Activated CD4-positive, alpha-beta memory T cell treated with anti-CD3 and anti-CD28 coated beads, Interleukin-2, amount 10 ng/mL, durations not matched to agents 7 days and 5 days (primary cell): ENCODE measurements at regions of chr2 and their contacts with region 1.

Region 1: GRCh38 chr2:24084386-24085361 is at the start of gene TP53I3:
- DNase-seq: peak; percentile 84
- H3K4me3 Mint-ChIP-seq: peak within 1 kb of the TSS; percentile 85
- H3K27ac Mint-ChIP-seq: peak within 1 kb of the TSS; percentile 85
- H3K4me1 Mint-ChIP-seq: peaks cover 21% of the 10 kb centered on the region
- H3K27me3 Mint-ChIP-seq: no peaks in the 10 kb centered on the region
- total RNA-seq, gene TP53I3: 2.7 to 2.9 TPM

Region 2: GRCh38 chr2:23824777-23825212 is 259.9 kb before region 1 on chr2:
- CTCF ChIA-PET with region 1: interaction called, 80 read pairs
- POLR2A ChIA-PET with region 1: interaction called, 4 read pairs
- DNase-seq: no peak
- H3K4me3 Mint-ChIP-seq: no peak overlapping the region
- H3K27ac Mint-ChIP-seq: no peak overlapping the region
- H3K4me1 Mint-ChIP-seq: no peaks in the 10 kb centered on the region
- H3K27me3 Mint-ChIP-seq: no peaks in the 10 kb centered on the region

Region 3: DNA sequence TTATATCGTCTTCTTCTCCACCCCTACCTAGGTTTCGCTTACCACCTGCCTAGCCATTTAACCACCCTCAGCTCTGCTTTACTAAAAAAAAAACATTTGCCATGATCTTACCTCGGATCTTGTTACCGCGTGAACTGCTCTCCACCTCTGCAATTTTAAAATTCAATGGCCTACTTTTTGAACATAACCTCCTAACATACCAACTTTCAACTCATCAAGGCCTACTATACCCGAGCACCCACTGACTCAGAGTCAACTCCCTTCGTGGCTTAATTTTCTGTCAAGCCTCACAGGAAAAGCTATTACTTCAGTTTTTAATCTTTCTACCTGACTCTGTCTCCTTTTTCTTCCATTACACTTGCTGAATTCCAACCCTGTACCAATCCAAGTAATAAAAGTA is 213.5 kb before region 1 on chr2:
- CTCF ChIA-PET with region 1: no interaction called
- POLR2A ChIA-PET with region 1: no interaction called
- DNase-seq: no peak
- H3K4me3 Mint-ChIP-seq: no peak overlapping the region
- H3K27ac Mint-ChIP-seq: no peak overlapping the region
- H3K4me1 Mint-ChIP-seq: peaks cover 15% of the 10 kb centered on the region
- H3K27me3 Mint-ChIP-seq: no peaks in the 10 kb centered on the region

Region 4: DNA sequence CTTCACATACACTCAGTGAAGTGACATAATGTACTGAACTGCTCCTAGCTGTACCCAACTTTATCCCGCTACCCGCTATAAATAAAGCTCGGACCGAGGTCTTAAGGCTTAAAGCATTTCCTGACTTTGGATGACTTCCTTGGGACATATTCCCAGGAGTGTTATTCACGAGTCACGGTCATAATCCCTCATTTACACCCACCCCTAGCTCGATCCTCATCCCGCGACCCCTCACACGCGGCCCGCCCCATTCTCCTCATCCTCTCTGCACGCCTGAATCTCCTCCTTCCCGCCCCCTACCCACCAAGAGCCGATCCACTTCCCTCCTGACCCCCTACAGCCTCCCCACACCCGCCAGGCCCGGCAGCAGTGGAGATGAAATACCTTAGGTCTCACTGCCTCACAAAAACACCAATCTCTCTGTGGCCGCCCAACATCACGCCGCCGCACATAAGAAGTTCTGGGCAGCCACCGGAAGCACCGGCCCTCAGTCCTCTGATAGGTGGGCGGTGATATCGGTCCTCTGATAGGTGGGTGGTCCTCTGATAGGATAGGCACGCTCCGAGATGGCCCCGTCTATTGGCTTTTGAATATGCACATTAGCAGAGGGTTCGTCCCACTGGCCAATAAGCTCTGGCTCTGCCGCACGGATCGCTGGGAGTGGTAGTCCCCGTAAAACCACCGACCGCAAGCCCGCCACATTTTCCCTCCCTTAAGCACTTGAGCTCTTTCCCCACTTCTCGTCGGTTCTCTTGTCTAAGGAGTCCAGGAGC is 37.6 kb before region 1 on chr2 and contains the start of gene WDCP:
- CTCF ChIA-PET with region 1: interaction called, 20 read pairs
- POLR2A ChIA-PET with region 1: interaction called, 16 read pairs
- DNase-seq: peak; percentile 96
- H3K4me3 Mint-ChIP-seq: peak within 1 kb of the TSS; percentile 96
- H3K27ac Mint-ChIP-seq: peak within 1 kb of the TSS; percentile 85
- H3K4me1 Mint-ChIP-seq: peaks cover 41% of the 10 kb centered on the region
- H3K27me3 Mint-ChIP-seq: peaks cover 2% of the 10 kb centered on the region
- total RNA-seq, gene WDCP: 18.5 to 19.1 TPM

Region 5: GRCh38 chr2:24058564-24059271 is 26.0 kb before region 1 on chr2:
- CTCF ChIA-PET with region 1: interaction called, 11 read pairs
- POLR2A ChIA-PET with region 1: no interaction called
- DNase-seq: no peak
- H3K4me3 Mint-ChIP-seq: no peak overlapping the region
- H3K27ac Mint-ChIP-seq: no peak overlapping the region
- H3K4me1 Mint-ChIP-seq: peaks cover 7% of the 10 kb centered on the region
- H3K27me3 Mint-ChIP-seq: no peaks in the 10 kb centered on the region

Region 6: DNA sequence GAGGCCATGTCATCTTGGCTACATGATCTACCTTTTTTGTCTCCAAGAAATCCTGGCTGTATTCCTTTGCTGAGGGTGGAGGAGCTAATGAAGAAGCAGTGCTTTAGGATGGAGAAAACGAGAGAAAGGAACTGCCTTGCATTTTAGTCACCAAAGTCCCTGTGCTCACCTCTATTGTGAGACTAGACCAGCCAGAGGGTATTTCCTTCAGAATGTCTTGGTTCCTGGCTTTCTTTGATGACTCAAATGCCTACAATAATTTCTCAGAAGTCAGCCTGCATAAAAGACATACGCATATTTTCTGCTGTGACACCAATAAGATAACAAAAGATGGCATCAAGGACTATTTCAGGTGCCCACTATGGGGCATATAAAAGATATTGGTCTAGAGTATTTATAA is 19.3 kb before region 1 on chr2:
- CTCF ChIA-PET with region 1: interaction called, 15 read pairs
- POLR2A ChIA-PET with region 1: no interaction called
- DNase-seq: no peak
- H3K4me3 Mint-ChIP-seq: no peak overlapping the region
- H3K27ac Mint-ChIP-seq: no peak overlapping the region
- H3K4me1 Mint-ChIP-seq: peaks cover 14% of the 10 kb centered on the region
- H3K27me3 Mint-ChIP-seq: no peaks in the 10 kb centered on the region

Region 7: GRCh38 chr2:24164125-24164973 is 79.7 kb after region 1 on chr2:
- CTCF ChIA-PET with region 1: interaction called, 13 read pairs
- POLR2A ChIA-PET with region 1: no interaction called
- DNase-seq: peak; percentile 36
- H3K4me3 Mint-ChIP-seq: no peak overlapping the region
- H3K27ac Mint-ChIP-seq: no peak overlapping the region
- H3K4me1 Mint-ChIP-seq: no peaks in the 10 kb centered on the region
- H3K27me3 Mint-ChIP-seq: peaks cover 2% of the 10 kb centered on the region